ENCODE measurements at regions of chr3 and their contacts with region 1.

Region 1: DNA sequence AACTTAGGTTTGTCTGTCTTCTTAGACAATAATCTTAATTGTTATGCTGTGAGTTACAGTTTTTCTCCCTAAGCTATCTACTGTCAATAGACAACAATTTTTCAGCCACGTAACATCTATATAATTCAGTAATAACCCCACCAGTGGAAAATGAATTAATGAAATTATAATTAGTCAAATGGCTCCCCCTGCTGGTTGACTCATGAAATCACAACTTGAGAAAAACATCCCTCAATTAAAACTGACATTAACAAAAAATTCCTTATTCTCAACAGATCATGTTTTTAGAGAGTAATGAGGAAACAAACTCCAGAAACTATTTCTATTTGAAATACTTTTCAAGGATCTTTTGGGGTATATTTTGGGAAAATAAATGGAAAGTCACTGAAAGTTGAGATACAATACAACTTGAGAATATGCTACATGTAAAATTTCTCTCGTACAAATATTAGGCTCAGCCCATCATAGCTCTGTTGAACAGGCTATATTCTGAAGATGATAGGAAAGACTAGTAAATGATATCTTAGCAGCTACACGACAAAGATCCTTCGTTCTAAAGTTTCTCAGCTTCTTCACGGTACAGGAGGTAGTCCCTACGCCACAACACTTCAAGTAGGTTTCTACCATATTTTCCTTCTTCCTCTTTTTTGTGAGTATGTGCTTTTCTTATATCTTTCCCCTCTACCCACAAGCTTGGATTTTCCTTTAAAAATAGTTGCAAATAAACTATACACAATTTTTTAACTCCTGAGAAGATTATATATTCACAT is 20.7 kb downstream of the PPP1R2 start:
- DNase-seq: no peak
- H3K4me3 ChIP-seq: no peak overlapping the region
- H3K27ac ChIP-seq: no peak overlapping the region
- H3K4me1 ChIP-seq: peaks cover 6% of the 10 kb centered on the region
- H3K27me3 ChIP-seq: no peaks in the 10 kb centered on the region
- CTCF ChIP-seq: peak; percentile 82

Region 2: DNA sequence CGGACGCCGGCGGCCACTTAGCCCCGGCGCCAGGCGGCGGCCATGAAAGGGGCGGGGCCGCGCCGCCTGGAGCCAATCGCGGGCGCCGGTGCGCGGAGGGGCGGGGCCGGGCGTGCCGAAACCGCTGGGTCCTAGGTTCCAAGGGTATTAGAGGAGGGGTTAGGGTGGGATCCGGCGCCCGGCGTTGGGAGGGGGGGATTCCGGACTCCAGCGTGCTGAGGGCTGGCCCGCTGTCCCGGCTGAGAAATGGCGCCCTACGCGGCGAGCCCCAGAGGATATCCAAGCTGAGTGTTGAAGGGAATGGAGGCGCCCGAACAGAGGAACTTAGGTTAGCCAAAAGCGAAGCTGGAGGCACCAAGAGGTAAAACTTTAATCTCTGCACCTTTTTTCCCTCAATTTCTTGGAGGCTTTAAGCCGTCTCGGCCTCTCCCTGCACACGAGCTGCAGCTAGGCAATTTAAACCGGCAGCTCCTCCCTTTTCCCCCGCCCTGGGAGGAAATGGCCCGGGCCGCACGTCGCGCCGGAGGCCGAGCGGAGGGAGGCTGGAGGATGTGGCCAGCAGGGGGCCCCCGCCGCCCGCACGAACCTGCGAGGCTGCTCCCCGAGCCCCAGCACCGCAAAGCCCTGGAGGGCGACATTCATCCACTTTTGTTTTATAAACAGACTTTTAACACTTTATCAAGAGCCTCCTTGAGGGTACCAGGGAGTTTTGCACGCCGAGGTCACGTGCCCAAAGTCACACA is 251.2 kb before region 1 on chr3 and contains the start of gene XXYLT1:
- intact Hi-C with region 1: loop called (anchors 5 kb)
- DNase-seq: peak; percentile 94
- H3K4me3 ChIP-seq: peak within 1 kb of the TSS; percentile 90
- H3K27ac ChIP-seq: peak within 1 kb of the TSS; percentile 96
- H3K4me1 ChIP-seq: peaks cover 31% of the 10 kb centered on the region
- H3K27me3 ChIP-seq: no peaks in the 10 kb centered on the region
- CTCF ChIP-seq: peak; percentile 95
- total RNA-seq, gene XXYLT1: 2.3 TPM

Region 3: DNA sequence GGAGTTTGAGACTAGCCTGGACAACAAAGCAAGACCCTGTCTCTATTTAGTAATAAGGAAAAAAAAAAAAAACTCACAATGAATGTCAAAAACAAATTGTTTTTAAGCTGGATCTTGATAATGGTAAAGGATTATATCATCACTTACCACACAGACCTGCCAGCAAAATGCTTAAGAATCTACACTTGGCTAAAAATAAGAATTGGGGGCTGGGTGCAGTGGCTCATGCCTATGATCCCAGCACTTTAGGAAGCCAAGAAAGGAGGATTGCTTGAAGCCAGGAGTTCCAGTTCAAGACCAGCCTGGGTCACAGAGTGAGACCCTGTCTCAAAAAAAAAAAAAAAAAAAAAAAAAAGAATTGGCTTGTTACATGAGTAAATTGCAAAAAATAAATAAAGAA is 110.6 kb before region 1 on chr3:
- intact Hi-C with region 1: no loop called
- DNase-seq: no peak
- H3K4me3 ChIP-seq: no peak overlapping the region
- H3K27ac ChIP-seq: no peak overlapping the region
- H3K4me1 ChIP-seq: peaks cover 5% of the 10 kb centered on the region
- H3K27me3 ChIP-seq: no peaks in the 10 kb centered on the region
- CTCF ChIP-seq: no peak

Measured in left ventricle myocardium inferior (tissue), 1 donor.